ENCODE measurements at regions of chr4 and their contacts with region 1.

Region 1: GRCh38 chr4:56907489-56908205 is at the start of gene REST:
- DNase-seq: peak; percentile 59 to 74 (median 62)
- H3K4me3 ChIP-seq: peak within 1 kb of the TSS; percentile 58 to 95 (median 94)
- H3K4me3 Mint-ChIP-seq: peak within 1 kb of the TSS; percentile 98 to 99
- H3K27ac ChIP-seq: peak within 1 kb of the TSS in 1 of 2 donors; percentile 94
- H3K27ac Mint-ChIP-seq: peak within 1 kb of the TSS; percentile 80 to 94 (median 84)
- H3K4me1 ChIP-seq: peaks cover 30 to 37% of the 10 kb centered on the region in 2 donors
- H3K4me1 Mint-ChIP-seq: peaks cover 41% of the 10 kb centered on the region
- H3K27me3 ChIP-seq: no peaks in the 10 kb centered on the region
- H3K27me3 Mint-ChIP-seq: no peaks in the 10 kb centered on the region
- CTCF ChIP-seq: no peak
- polyA plus RNA-seq, gene REST: 6.3 to 71.2 (median 44.2) TPM

Region 2: DNA sequence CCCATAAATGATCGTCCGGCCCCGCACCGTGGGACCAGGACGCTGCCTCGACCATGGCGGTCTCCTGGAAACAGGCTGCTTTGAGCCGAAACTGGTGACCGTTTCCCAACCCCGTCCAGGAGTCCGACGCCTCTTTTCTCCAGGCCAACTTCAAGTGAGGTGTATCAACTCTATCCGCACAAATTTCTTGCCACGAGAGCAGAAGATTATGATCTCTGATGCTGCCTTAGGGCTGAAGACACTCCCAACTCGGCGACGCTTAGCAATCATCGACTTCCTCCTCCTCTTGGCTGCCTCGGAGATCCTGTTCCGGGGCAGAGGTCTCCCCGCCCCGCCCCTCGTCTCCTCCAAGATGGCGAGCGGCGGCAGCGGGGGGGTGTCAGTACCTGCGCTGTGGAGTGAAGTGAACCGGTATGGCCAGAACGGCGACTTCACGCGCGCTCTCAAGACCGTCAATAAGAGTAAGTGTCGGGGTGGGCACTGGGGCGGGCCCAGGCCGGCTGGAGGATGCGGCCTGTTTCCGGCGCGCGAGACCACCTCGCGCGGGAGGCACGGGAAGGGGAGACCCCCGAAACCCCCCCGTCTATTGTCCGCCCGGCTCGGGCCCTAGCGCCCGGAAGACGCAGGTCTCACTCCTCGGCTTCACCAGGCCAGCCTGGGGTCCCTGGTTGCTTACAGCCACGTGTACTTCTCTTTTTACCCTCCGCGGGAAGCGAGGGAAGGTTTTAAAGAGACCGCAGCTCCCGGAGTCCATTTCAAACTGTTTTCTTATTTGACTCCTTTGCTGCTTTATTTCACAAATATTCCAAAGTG is 440.2 kb before region 1 on chr4 and contains the start of gene SRP72:
- intact Hi-C with region 1: loop called in 1 of 2 experiments (anchors 10 kb)
- DNase-seq: peak; percentile 77 to 80 (median 79)
- H3K4me3 ChIP-seq: peak within 1 kb of the TSS; percentile 90 to 98 (median 92)
- H3K4me3 Mint-ChIP-seq: peak within 1 kb of the TSS; percentile 98 to 99
- H3K27ac ChIP-seq: peak within 1 kb of the TSS; percentile 76 to 91
- H3K27ac Mint-ChIP-seq: peak within 1 kb of the TSS; percentile 92 to 98 (median 96)
- H3K4me1 ChIP-seq: peaks cover 28 to 44% of the 10 kb centered on the region in 2 donors
- H3K4me1 Mint-ChIP-seq: peaks cover 45% of the 10 kb centered on the region
- H3K27me3 ChIP-seq: no peaks in the 10 kb centered on the region
- H3K27me3 Mint-ChIP-seq: no peaks in the 10 kb centered on the region
- CTCF ChIP-seq: no peak
- polyA plus RNA-seq, gene SRP72: 54.4 to 140 (median 103) TPM

Region 3: GRCh38 chr4:56958111-56958517 is 50.5 kb after region 1 on chr4:
- intact Hi-C with region 1: loop called (anchors 5 to 10 kb)
- DNase-seq: peak; percentile 92 to 97 (median 95)
- H3K4me3 ChIP-seq: peak overlapping the region; percentile 8 to 68 (median 43)
- H3K4me3 Mint-ChIP-seq: peak overlapping the region; percentile 59 to 72
- H3K27ac ChIP-seq: peak overlapping the region; percentile 46 to 84
- H3K27ac Mint-ChIP-seq: peak overlapping the region; percentile 80 to 96 (median 92)
- H3K4me1 ChIP-seq: peaks cover 11 to 16% of the 10 kb centered on the region in 2 donors
- H3K4me1 Mint-ChIP-seq: peaks cover 15% of the 10 kb centered on the region
- H3K27me3 ChIP-seq: no peaks in the 10 kb centered on the region
- H3K27me3 Mint-ChIP-seq: peaks cover 0 to 2% (median 0%) of the 10 kb centered on the region in 3 donors
- CTCF ChIP-seq: no peak

Region 4: DNA sequence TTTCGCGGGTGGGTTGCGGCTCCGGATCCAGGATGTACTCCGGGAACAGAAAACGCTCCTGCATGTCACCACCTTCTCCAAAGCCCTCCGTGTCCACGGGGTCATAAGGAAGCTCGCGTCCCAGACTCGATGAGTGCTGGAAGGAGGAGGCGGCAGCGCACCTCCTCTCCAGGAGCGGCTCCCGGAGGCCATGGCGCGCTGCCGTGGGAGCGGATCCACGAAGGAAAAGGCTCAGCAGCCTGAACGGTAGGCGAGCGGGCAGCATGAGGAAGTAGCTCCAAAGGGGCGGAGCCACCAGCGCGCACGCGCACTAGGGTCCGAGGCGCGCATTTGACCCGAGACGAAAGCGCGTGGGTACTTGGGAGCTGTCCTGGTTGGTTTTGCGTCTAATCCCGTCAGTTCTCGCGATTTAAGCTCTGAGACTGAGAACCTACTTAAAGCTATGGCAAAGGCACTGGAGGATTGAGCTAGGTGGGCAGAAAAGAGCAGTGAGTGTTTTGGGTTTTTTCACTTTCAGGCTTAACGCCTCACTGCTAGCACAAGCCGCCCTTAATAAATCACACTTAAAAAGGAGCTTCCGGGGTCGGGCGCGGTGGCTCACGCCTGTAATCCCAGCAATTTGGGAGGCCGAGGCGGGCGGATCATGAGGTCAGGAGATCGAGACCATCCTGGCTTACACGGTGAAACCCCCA is 69.8 kb after region 1 on chr4 and contains the start of gene NOA1:
- intact Hi-C with region 1: loop called (anchors 5 kb)
- DNase-seq: peak; percentile 99
- H3K4me3 ChIP-seq: peak within 1 kb of the TSS; percentile 86 to 99 (median 87)
- H3K4me3 Mint-ChIP-seq: peak within 1 kb of the TSS; percentile 100
- H3K27ac ChIP-seq: peak within 1 kb of the TSS; percentile 91 to 95
- H3K27ac Mint-ChIP-seq: peak within 1 kb of the TSS; percentile 92 to 99 (median 98)
- H3K4me1 ChIP-seq: peaks cover 34 to 43% of the 10 kb centered on the region in 2 donors
- H3K4me1 Mint-ChIP-seq: peaks cover 39% of the 10 kb centered on the region
- H3K27me3 ChIP-seq: no peaks in the 10 kb centered on the region
- H3K27me3 Mint-ChIP-seq: no peaks in the 10 kb centered on the region
- CTCF ChIP-seq: no peak
- polyA plus RNA-seq, gene NOA1: 10.4 to 12.6 (median 11.5) TPM

Region 5: DNA sequence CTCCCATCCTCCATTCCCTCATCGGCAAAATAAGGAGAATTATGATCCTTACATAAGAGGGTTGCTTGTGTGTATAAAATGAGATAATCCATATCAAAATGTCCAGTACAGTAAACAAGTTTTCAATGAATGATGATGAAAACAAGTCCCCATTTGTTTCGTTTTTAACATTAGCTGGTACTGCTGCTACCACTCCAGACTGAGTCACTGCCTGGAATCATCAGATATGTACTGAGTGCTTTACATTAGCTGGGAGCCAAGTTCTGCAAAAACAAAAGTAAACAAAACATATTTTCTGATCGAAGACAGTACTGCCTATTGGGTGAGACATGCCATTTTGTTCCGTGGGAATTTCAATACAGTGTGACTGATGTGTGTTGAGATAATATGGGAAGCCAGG is 325.7 kb after region 1 on chr4:
- intact Hi-C with region 1: no loop called
- DNase-seq: no peak
- H3K4me3 ChIP-seq: no peak overlapping the region
- H3K4me3 Mint-ChIP-seq: no peak overlapping the region
- H3K27ac ChIP-seq: no peak overlapping the region
- H3K27ac Mint-ChIP-seq: no peak overlapping the region
- H3K4me1 ChIP-seq: no peaks in the 10 kb centered on the region
- H3K4me1 Mint-ChIP-seq: no peaks in the 10 kb centered on the region
- H3K27me3 ChIP-seq: no peaks in the 10 kb centered on the region
- H3K27me3 Mint-ChIP-seq: peaks cover 0 to 2% (median 2%) of the 10 kb centered on the region in 3 donors
- CTCF ChIP-seq: no peak